Heart left ventricle (tissue), 16 donors: ENCODE measurements at regions of chr17 and their contacts with region 1.

Region 1: DNA sequence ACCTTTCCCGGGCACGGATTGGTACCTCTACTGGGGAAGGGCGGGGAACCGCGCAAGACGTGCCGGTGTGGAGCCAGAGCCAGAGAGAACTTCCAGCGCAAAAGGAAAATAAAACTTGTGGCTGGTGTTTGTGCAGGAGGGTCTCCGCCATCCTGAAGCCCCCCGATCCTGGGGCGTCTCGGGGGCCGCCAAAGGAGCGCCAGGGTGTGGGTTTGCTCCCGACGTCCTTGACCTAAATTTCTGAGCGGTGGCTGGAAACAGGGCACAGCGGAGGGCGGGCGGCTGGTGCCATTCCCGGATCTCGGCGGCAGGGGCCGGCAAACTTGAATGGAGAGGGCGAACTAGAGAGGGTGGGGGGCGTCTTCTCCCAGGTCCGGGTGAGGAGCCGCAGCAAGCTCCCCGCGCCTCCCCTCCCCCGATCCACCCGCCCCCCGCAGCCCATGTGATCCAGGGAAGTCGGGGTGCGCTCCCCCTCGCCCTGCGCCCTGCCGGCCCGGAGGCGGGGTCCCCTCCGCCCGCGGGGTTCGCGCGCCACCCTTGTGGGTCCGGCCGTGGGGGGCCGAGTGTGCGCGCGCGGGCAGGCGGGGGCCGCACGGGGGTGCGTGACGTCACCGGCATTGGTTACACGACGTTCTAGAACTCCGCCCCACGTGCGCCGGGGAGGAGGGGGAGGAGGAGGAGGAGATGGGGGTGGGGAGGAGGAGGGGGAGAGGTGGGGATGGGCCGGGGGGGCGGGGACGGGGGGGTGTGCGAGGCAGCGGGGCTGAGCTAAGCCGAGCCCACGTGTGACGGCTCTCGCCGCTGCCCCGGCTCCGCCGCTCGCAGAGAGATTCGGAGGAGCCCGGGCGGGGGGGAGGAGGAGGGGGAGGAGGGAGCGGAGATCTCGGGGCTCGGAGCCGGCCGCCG is at the start of gene MSI2:
- DNase-seq: peak; percentile 94 to 97 (median 96)
- ATAC-seq: peak; percentile 76 to 94 (median 90)
- H3K4me3 ChIP-seq: peak within 1 kb of the TSS; percentile 78 to 98 (median 88)
- H3K27ac ChIP-seq: peak within 1 kb of the TSS; percentile 86 to 99 (median 98)
- H3K4me1 ChIP-seq: peaks cover 0 to 40% (median 19%) of the 10 kb centered on the region in 12 donors
- H3K27me3 ChIP-seq: no peaks in the 10 kb centered on the region
- CTCF ChIP-seq: peak in 2 of 12 donors; percentile 3 to 8
- POLR2A ChIP-seq: peak in 1 of 2 donors; percentile 21
- total RNA-seq, gene MSI2: 43.2 to 120 (median 104) TPM

Region 2: DNA sequence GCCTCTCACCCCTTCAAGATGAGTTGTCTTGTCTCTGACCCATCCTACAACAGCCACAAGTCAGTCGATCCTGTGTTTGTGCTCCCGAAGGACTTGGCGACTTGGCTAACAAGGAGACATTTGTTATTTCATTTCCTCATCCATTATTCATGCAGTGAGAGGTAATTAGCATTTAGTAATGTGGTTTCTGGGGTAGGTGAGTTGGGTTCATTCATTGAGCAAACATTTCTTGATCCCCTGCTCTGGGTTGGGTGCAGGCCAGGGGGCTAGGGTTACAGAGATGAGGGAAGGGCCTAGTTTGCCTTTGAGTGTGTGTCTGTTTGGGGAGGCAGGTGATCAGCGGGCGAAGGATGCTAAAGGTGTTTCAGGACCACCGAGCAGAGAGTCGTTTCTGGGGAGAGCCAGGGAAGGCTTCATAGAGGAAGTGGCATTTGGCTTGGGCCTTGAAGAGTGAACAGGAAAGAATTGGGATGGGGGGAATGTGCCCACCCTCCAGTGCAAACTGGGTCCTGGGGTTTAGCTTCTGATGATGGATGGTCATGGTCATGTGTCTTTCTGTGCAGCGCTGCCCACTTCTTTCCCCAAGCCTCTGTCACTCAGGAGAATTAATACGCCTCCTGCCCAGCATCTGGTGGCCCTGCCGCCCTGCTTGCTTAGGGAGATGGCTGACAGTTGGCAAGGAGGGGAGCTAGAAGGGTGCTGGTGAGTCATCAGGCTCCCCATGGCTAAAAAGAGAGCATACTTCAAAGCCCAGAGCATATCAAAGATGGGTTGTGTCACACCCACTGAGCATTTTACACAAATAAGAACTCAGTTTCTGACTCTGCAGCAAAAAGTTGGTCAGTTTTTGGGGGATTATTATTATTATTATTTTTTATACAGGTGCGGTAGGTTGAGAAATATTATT is 38.9 kb after region 1 on chr17:
- intact Hi-C with region 1: no loop called
- DNase-seq: peak in 4 of 5 donors; percentile 46 to 65 (median 60)
- ATAC-seq: peak; percentile 92 to 94 (median 94)
- H3K4me3 ChIP-seq: no peak overlapping the region
- H3K27ac ChIP-seq: peak overlapping the region in 7 of 12 donors; percentile 3 to 69 (median 51)
- H3K4me1 ChIP-seq: peaks cover 0 to 37% (median 15%) of the 10 kb centered on the region in 12 donors
- H3K27me3 ChIP-seq: no peaks in the 10 kb centered on the region
- CTCF ChIP-seq: no peak
- POLR2A ChIP-seq: no peak

Region 3: DNA sequence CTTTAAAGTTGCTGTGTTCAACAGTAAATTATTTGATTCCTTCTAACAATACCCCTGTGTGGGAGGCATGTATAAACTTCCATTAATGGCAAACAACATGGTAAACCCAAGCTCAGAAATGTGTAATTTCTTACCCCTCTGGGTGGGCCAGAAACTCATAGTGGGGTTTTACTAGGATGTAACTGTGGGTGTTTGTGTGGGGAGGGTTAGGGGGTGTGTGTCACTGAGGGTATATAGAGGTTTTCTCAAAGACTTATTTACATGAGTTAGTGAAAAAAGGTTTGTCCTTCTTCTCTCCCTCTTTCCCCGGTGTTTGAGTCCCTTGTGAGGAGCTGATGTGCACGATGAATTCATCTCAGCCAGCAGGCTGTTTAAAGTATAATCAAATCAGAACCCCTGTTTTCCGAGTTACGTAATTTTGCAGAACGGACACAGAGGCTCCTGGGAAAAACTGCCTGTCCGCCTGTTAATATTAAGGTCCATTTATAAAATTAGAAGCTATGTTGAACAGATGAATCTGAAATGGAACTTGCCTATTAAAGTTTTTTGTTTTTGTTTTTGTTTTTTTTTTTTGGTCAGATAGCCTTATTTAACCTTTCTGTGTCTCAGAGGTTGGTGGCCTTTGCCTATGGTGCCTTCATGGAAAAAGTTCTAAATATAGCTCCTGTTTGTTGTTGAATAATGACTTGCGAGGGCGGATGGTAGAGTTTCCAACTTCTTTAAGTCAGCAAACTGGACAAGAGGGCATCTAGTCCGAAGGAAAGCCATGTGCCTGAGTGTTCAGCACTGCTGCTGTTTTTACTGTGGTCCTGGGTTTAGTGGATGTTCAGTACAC is 73.6 kb after region 1 on chr17:
- intact Hi-C with region 1: loop called in 1 of 10 experiments (anchors 10 kb)
- DNase-seq: peak in 2 of 5 donors; percentile 27 to 35
- ATAC-seq: peak; percentile 53 to 85 (median 78)
- H3K4me3 ChIP-seq: peak overlapping the region in 2 of 12 donors; percentile 8
- H3K27ac ChIP-seq: peak overlapping the region; percentile 26 to 87 (median 76)
- H3K4me1 ChIP-seq: peaks cover 0 to 54% (median 16%) of the 10 kb centered on the region in 12 donors
- H3K27me3 ChIP-seq: no peaks in the 10 kb centered on the region
- CTCF ChIP-seq: no peak
- POLR2A ChIP-seq: no peak

Region 4: DNA sequence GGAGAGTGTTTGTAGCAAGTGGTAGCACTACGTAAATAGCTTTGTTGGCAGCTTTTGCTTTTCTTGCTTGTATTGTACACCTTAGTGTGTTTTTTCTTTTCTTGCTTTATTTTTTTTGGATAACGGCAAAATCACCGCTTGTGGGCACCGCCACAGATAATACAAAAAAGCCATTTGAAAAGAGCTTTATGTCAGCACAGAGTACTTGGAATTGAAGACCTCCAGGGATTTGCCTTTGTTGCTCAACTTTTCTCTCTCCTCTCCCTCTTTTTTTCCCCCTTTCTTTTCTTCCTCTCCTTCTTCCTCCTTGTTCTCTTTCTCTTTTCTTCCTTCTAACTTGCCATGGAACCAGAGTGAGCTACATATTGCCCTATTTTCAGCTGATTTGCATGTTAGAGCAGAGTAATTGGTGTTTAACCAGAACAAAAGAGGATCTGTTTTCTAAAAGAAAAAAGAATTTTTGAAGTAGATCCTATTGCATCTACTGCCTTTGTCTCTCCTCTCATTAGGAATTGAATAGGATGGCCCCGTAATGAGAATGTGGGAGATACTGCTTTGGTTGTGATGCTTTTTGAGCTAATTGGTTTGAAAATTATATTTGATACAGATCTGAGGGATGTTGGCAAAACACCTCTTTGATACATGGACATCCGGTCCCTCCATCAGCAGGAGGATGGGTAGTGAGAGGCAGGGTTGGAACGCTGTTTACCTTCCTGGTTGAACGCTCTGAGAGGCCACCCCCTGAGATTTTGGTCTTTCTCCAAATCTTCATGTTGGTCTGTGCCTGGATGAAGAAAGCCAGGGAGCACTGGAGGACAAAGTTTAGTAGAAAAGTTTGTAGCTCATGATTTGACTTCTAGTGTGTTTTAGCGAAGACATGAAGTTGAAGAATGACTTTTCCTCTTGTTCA is 85.8 kb after region 1 on chr17:
- intact Hi-C with region 1: loop called in 1 of 10 experiments (anchors 10 kb)
- DNase-seq: no peak
- ATAC-seq: no peak
- H3K4me3 ChIP-seq: no peak overlapping the region
- H3K27ac ChIP-seq: peak overlapping the region in 2 of 12 donors; percentile 1 to 25
- H3K4me1 ChIP-seq: peaks cover 0 to 63% (median 20%) of the 10 kb centered on the region in 12 donors
- H3K27me3 ChIP-seq: no peaks in the 10 kb centered on the region
- CTCF ChIP-seq: no peak
- POLR2A ChIP-seq: no peak

Region 5: DNA sequence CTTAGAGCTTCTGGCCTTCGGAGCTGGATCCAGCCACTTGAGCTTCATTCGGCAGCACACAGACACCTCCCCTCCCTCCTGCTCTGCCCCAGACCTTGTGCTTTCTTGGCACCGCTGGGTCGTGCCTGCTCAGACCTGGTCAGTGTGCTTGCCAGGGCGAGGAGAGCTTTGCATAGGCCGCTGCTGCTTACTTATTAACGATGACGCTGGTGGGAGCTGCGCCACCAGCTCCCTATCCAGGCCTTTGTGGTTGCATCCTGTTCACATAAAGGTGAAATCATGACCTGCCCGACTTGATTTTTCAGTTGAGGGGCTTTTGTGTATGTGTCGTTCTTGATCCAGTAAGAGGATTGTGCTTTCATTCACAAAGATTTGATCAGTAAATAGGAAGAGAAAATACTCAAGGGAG is 101.4 kb after region 1 on chr17:
- intact Hi-C with region 1: loop called in 1 of 10 experiments (anchors 10 kb)
- DNase-seq: peak; percentile 79 to 93 (median 82)
- ATAC-seq: peak; percentile 79 to 91 (median 87)
- H3K4me3 ChIP-seq: peak overlapping the region in 3 of 12 donors; percentile 1 to 22 (median 3)
- H3K27ac ChIP-seq: peak overlapping the region in 11 of 12 donors; percentile 26 to 89 (median 76)
- H3K4me1 ChIP-seq: peaks cover 0 to 65% (median 36%) of the 10 kb centered on the region in 12 donors
- H3K27me3 ChIP-seq: no peaks in the 10 kb centered on the region
- CTCF ChIP-seq: no peak
- POLR2A ChIP-seq: no peak

Region 6: DNA sequence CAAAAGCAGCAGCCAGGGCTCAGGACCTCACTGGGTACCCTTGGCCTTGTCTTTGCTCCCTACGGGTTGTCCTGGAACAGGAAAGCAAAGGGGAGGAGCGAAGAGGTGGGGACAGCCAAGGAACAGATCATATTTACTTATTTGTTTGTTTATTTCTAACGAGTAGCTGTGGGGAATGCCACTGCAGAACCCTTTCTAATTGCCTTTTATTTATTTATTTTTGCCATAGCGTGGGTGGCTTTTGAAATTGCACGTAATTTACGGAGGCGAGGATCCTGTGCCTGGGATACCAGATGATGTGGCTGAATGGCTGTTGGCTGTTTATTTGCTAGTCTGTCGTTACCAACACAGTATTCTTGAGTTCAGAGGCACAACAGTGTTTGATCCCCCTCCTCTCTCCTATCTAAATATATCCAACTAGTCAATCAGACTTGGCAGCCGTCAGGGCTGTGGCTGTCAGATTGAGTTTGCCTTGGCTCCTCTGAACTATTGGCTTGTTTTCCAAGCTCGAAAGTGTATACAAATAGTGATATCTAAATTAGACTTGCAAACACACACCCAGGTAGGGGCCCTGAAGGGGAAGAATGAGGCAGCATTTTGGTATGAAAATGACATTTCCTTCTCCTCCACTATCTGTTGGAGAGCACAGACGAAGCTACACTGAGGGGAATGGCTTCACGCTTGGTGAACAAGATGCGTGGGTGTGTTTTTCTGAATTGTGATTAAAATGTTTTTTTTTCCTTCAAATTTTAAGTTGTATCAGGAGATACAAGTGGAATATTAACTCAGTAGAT is 110.7 kb after region 1 on chr17:
- intact Hi-C with region 1: loop called in 1 of 10 experiments (anchors 5 kb)
- DNase-seq: peak in 4 of 5 donors; percentile 17 to 70 (median 54)
- ATAC-seq: peak; percentile 70 to 83 (median 76)
- H3K4me3 ChIP-seq: peak overlapping the region in 2 of 12 donors; percentile 6 to 12
- H3K27ac ChIP-seq: peak overlapping the region; percentile 22 to 84 (median 65)
- H3K4me1 ChIP-seq: peaks cover 0 to 71% (median 50%) of the 10 kb centered on the region in 12 donors
- H3K27me3 ChIP-seq: no peaks in the 10 kb centered on the region
- CTCF ChIP-seq: no peak
- POLR2A ChIP-seq: no peak

Region 7: GRCh38 chr17:57440522-57441485 is 184.8 kb after region 1 on chr17:
- intact Hi-C with region 1: loop called in 4 of 10 experiments (anchors 5 to 10 kb)
- DNase-seq: peak; percentile 76 to 88 (median 78)
- ATAC-seq: peak; percentile 74 to 86 (median 84)
- H3K4me3 ChIP-seq: peak overlapping the region in 1 of 12 donors; percentile 7
- H3K27ac ChIP-seq: peak overlapping the region; percentile 11 to 87 (median 69)
- H3K4me1 ChIP-seq: peaks cover 4 to 91% (median 57%) of the 10 kb centered on the region in 12 donors
- H3K27me3 ChIP-seq: no peaks in the 10 kb centered on the region
- CTCF ChIP-seq: peak; percentile 16 to 80 (median 56)
- POLR2A ChIP-seq: no peak

Region 8: GRCh38 chr17:57671667-57672632 is 415.9 kb after region 1 on chr17:
- intact Hi-C with region 1: loop called in 1 of 10 experiments (anchors 5 kb)
- DNase-seq: peak; percentile 80 to 87 (median 82)
- ATAC-seq: peak; percentile 78 to 91 (median 88)
- H3K4me3 ChIP-seq: no peak overlapping the region
- H3K27ac ChIP-seq: peak overlapping the region in 2 of 12 donors; percentile 8 to 35
- H3K4me1 ChIP-seq: peaks cover 0 to 28% (median 10%) of the 10 kb centered on the region in 12 donors
- H3K27me3 ChIP-seq: no peaks in the 10 kb centered on the region
- CTCF ChIP-seq: peak; percentile 87 to 97 (median 96)
- POLR2A ChIP-seq: no peak